ENCODE measurements at regions of chr9 and their contacts with region 1.

Region 1: GRCh38 chr9:34637356-34638137 is at the start of gene SIGMAR1:
- DNase-seq: peak; percentile 90 to 95 (median 94)
- H3K4me3 ChIP-seq: peak within 1 kb of the TSS; percentile 90
- H3K4me3 Mint-ChIP-seq: peak within 1 kb of the TSS; percentile 83 to 94 (median 88)
- H3K27ac ChIP-seq: peak within 1 kb of the TSS; percentile 41
- H3K27ac Mint-ChIP-seq: peak within 1 kb of the TSS; percentile 83 to 97 (median 96)
- H3K4me1 ChIP-seq: peaks cover 22% of the 10 kb centered on the region
- H3K4me1 Mint-ChIP-seq: peaks cover 37 to 40% (median 37%) of the 10 kb centered on the region in 3 donors
- H3K27me3 ChIP-seq: no peaks in the 10 kb centered on the region
- H3K27me3 Mint-ChIP-seq: no peaks in the 10 kb centered on the region
- total RNA-seq, gene SIGMAR1: 138 to 141 TPM

Region 2: DNA sequence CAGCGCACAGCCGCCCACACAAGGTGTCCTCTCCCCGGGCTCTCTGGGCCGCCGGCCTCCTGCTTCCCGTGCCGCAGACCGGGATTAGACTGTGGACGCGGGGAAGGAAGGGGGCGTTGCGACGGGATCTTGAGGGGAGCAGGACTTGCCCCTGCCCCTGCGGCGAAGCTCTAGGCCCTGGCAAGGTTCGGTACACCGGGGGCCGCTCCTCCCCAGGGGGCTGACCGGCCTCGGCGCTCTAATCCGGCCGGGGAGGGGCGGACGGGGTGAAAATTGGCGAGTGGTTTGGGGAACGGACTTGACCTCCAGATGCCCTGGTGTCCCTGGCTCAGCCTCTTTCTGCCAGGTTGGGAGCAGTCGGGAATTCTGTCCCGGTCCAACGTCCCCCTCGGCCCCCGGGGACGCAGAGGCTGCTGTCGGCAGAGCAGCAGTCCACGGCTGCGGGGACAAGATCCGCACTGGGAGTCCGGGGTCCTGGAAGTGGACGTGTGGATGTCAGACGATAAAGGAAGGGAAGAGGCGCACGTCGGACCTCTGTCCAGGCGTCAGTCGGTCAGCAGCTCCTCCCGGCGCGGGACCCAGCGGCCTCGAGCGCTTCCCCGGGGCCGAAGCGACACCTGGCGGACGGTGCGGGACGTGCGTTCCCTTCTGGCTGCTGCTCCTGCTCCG is 46.2 kb before region 1 on chr9:
- CTCF ChIA-PET with region 1: interaction called, 10 read pairs
- POLR2A ChIA-PET with region 1: no interaction called
- DNase-seq: peak; percentile 62 to 76 (median 68)
- H3K4me3 ChIP-seq: peak overlapping the region; percentile 66
- H3K4me3 Mint-ChIP-seq: peak overlapping the region; percentile 67 to 89 (median 76)
- H3K27ac ChIP-seq: no peak overlapping the region
- H3K27ac Mint-ChIP-seq: no peak overlapping the region
- H3K4me1 ChIP-seq: peaks cover 15% of the 10 kb centered on the region
- H3K4me1 Mint-ChIP-seq: peaks cover 17 to 40% (median 23%) of the 10 kb centered on the region in 3 donors
- H3K27me3 ChIP-seq: peaks cover 59% of the 10 kb centered on the region
- H3K27me3 Mint-ChIP-seq: peaks cover 55 to 78% of the 10 kb centered on the region in 2 donors

Region 3: GRCh38 chr9:34603610-34604231 is 33.8 kb before region 1 on chr9:
- CTCF ChIA-PET with region 1: interaction called, 47 read pairs
- POLR2A ChIA-PET with region 1: no interaction called
- DNase-seq: peak; percentile 65 to 86 (median 73)
- H3K4me3 ChIP-seq: no peak overlapping the region
- H3K4me3 Mint-ChIP-seq: peak overlapping the region in 1 of 7 donors; percentile 2
- H3K27ac ChIP-seq: no peak overlapping the region
- H3K27ac Mint-ChIP-seq: no peak overlapping the region
- H3K4me1 ChIP-seq: no peaks in the 10 kb centered on the region
- H3K4me1 Mint-ChIP-seq: no peaks in the 10 kb centered on the region
- H3K27me3 ChIP-seq: no peaks in the 10 kb centered on the region
- H3K27me3 Mint-ChIP-seq: no peaks in the 10 kb centered on the region

Region 4: GRCh38 chr9:34611829-34612630 is 25.5 kb before region 1 on chr9 and contains the start of gene RPP25L:
- CTCF ChIA-PET with region 1: interaction called, 47 read pairs
- POLR2A ChIA-PET with region 1: interaction called, 13 read pairs
- DNase-seq: peak; percentile 79 to 88 (median 86)
- H3K4me3 ChIP-seq: peak within 1 kb of the TSS; percentile 90
- H3K4me3 Mint-ChIP-seq: peak within 1 kb of the TSS; percentile 85 to 94 (median 88)
- H3K27ac ChIP-seq: peak within 1 kb of the TSS; percentile 85
- H3K27ac Mint-ChIP-seq: peak within 1 kb of the TSS; percentile 88 to 99 (median 93)
- H3K4me1 ChIP-seq: peaks cover 22% of the 10 kb centered on the region
- H3K4me1 Mint-ChIP-seq: peaks cover 22 to 32% (median 26%) of the 10 kb centered on the region in 3 donors
- H3K27me3 ChIP-seq: no peaks in the 10 kb centered on the region
- H3K27me3 Mint-ChIP-seq: peaks cover 0 to 2% of the 10 kb centered on the region in 2 donors
- total RNA-seq, gene RPP25L: 34.5 to 39.0 TPM

Region 5: DNA sequence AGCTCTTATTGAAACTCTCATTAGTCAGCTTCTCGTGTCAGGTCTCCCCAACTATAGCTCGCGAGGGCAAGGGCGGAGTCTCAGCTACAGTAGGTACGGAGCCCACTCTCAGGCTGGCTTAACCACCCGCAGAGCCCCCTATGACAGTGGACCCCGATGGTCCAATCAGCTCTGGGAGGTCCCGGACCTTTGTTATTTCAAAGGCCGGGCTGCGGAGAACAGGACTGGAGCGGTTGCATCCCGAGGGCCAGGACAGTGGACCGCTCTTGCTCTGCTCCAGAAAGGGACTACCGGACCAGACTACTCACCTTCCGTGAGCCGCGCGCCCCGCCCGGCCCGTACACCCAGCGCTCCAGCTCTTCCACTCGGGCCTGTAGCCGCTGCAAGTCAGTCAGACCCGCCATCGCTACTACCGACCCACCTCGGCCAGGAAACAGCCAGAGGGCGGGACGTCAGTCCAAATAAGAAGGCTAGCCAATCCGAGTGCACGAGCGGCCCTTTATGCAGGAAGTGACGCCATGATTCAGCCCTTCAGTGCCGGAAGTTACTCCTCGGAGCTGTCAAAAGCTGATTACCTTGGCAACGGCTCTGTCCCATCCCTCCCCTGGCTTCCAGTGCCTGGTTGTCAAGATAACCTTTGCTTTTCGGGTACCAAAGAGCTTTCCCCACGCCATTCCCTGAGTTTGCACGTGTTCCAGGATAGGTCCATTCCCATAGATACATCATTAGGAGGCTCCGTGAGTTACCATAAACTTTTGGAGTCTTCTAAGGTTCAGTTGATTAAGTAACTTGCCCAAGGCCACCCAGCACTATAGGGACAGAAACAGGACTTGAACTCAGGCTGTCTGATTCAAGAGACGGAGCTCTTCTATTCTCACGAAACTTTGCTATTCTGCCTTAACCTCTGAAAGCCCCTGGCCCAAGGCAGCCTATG is 17.2 kb before region 1 on chr9 and contains the start of gene DCTN3:
- CTCF ChIA-PET with region 1: interaction called, 97 read pairs
- POLR2A ChIA-PET with region 1: interaction called, 15 read pairs
- DNase-seq: peak; percentile 86 to 96 (median 89)
- H3K4me3 ChIP-seq: peak within 1 kb of the TSS; percentile 64
- H3K4me3 Mint-ChIP-seq: peak within 1 kb of the TSS; percentile 93 to 97 (median 95)
- H3K27ac ChIP-seq: peak within 1 kb of the TSS; percentile 59
- H3K27ac Mint-ChIP-seq: peak within 1 kb of the TSS; percentile 72 to 97 (median 95)
- H3K4me1 ChIP-seq: peaks cover 19% of the 10 kb centered on the region
- H3K4me1 Mint-ChIP-seq: peaks cover 28 to 42% (median 29%) of the 10 kb centered on the region in 3 donors
- H3K27me3 ChIP-seq: peaks cover 27% of the 10 kb centered on the region
- H3K27me3 Mint-ChIP-seq: peaks cover 30 to 31% of the 10 kb centered on the region in 2 donors
- total RNA-seq, gene DCTN3: 83.3 to 83.4 TPM

Region 6: GRCh38 chr9:34659592-34660535 is 22.3 kb after region 1 on chr9:
- CTCF ChIA-PET with region 1: interaction called, 16 read pairs
- POLR2A ChIA-PET with region 1: interaction called, 7 read pairs
- DNase-seq: no peak
- H3K4me3 ChIP-seq: no peak overlapping the region
- H3K4me3 Mint-ChIP-seq: peak overlapping the region in 1 of 7 donors; percentile 8
- H3K27ac ChIP-seq: no peak overlapping the region
- H3K27ac Mint-ChIP-seq: peak overlapping the region in 2 of 8 donors; percentile 66 to 75
- H3K4me1 ChIP-seq: peaks cover 37% of the 10 kb centered on the region
- H3K4me1 Mint-ChIP-seq: peaks cover 28 to 39% (median 35%) of the 10 kb centered on the region in 3 donors
- H3K27me3 ChIP-seq: no peaks in the 10 kb centered on the region
- H3K27me3 Mint-ChIP-seq: no peaks in the 10 kb centered on the region

Region 7: DNA sequence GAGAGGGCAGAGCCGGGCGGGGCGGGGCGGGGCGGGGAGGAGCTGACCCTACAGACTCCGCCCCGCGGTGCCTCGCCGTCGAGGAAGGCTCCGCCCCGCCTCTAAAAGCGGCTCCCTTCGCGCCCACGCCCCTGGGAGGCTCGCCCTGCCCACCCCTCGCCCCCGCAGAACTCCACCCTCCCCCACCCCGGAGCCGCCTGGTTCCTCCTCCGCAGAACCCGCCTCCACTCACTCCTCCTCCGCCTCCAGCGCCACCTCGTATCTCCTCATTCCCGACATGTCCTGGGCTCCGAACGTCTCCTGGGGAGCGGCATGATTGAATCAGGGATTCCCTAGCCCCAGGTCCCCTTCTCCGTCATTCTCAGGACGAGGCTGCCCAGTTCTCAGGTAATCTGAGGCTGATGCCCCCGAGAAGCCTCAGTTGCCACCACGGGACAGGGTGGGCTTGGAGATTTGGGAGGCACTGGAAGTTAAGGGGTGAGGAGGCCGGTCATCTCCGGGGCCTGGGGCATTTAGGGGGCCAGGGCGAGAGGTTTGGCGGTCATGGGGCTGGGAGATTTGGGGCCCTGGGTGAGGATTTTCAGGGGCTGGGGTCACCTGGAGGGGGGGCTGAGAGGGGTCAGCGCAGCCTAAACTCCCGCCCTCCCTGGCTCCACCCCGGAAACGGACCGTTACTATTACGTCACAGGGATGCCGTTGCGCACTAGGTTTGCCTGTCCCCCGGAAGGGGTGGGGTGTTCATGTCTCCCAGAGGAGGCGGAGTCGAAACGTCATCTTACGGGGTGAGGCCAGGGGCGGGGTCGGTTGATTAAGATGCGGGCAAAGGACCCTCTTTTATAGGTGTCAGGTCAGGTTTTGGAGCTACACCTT is 28.1 kb after region 1 on chr9:
- CTCF ChIA-PET with region 1: interaction called, 16 read pairs
- POLR2A ChIA-PET with region 1: interaction called, 7 read pairs
- DNase-seq: peak; percentile 84 to 93 (median 86)
- H3K4me3 ChIP-seq: peak overlapping the region; percentile 87
- H3K4me3 Mint-ChIP-seq: peak overlapping the region; percentile 82 to 97 (median 89)
- H3K27ac ChIP-seq: peak overlapping the region; percentile 96
- H3K27ac Mint-ChIP-seq: peak overlapping the region; percentile 87 to 99 (median 98)
- H3K4me1 ChIP-seq: peaks cover 48% of the 10 kb centered on the region
- H3K4me1 Mint-ChIP-seq: peaks cover 34 to 55% (median 41%) of the 10 kb centered on the region in 3 donors
- H3K27me3 ChIP-seq: no peaks in the 10 kb centered on the region
- H3K27me3 Mint-ChIP-seq: peaks cover 0 to 4% of the 10 kb centered on the region in 2 donors

Region 8: DNA sequence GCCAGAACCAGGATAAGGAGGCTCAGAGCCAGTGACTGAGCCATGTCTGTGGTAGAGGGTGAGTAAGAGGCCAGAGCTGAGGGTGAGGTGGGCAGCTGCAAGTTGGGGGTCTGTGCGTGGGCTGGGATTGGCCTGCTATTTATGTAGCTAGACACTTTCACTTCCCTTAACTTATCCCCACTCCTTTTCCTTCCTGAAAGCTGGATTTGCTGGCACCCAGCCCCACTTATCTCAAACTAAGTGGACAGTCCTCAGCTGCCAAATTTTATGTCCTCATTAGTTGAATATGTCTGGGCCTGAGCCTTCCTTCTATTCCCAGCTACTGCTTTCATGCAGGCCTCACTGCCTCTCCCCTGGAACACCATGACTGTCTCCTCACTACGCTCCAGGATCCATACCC is 72.5 kb after region 1 on chr9 and contains the start of gene CCL21:
- CTCF ChIA-PET with region 1: no interaction called
- POLR2A ChIA-PET with region 1: no interaction called
- DNase-seq: no peak
- H3K4me3 ChIP-seq: no peak within 1 kb of the TSS
- H3K4me3 Mint-ChIP-seq: no peak within 1 kb of the TSS
- H3K27ac ChIP-seq: no peak within 1 kb of the TSS
- H3K27ac Mint-ChIP-seq: no peak within 1 kb of the TSS
- H3K4me1 ChIP-seq: no peaks in the 10 kb centered on the region
- H3K4me1 Mint-ChIP-seq: no peaks in the 10 kb centered on the region
- H3K27me3 ChIP-seq: no peaks in the 10 kb centered on the region
- H3K27me3 Mint-ChIP-seq: peaks cover 15 to 23% of the 10 kb centered on the region in 2 donors
- total RNA-seq, gene CCL21: not detected

Measured in CD8-positive, alpha-beta memory T cell (primary cell).